HCT116 (cell line): ENCODE measurements at regions of chr3 and their contacts with region 1.

Region 1: DNA sequence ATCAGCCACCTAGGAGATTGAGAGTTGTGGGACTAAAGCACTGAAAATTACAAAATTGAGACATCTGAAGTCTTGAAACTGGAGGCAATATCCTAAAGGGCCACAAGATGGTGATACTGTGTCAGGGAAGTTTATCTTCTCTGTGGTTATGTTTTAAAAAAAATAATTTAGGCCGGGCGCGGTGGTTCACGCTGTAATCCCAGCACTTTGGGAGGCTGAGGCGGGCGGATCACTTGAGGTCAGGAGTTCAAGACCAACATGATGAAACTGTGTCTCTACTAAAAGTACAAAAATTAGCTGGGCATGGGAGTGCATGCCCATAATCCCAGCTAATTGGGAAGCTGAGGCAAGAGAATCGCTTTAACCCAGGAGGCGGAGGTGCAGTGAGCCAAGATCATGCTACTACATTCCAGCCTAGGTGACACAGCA is 17.9 kb upstream of the NIT2 start:
- DNase-seq: peak; percentile 46
- ATAC-seq: peak; percentile 86
- H3K4me3 ChIP-seq: no peak overlapping the region
- H3K27ac ChIP-seq: no peak overlapping the region
- H3K4me1 ChIP-seq: peaks cover 3 to 4% of the 10 kb centered on the region in 2 experiments; a peak in 2 of 4 replicates
- H3K27me3 ChIP-seq: no peaks in the 10 kb centered on the region
- CTCF ChIP-seq: peak; percentile 32 to 71 (median 65); a peak in 5 of 6 replicates
- POLR2A ChIP-seq: no peak
- RAD21 ChIP-seq: peak; percentile 73

Region 2: GRCh38 chr3:100590114-100590839 is 273.6 kb after region 1 on chr3:
- CTCF ChIA-PET with region 1: interaction called, 4 read pairs
- POLR2A ChIA-PET with region 1: no interaction called
- RAD21 ChIA-PET with region 1: no interaction called
- intact Hi-C with region 1: loop called (anchors 1 kb)
- DNase-seq: peak; percentile 63
- ATAC-seq: peak; percentile 91
- H3K4me3 ChIP-seq: peak overlapping the region; percentile 16 to 42; a peak in 3 of 4 replicates
- H3K27ac ChIP-seq: no peak overlapping the region
- H3K4me1 ChIP-seq: peaks cover 0 to 5% of the 10 kb centered on the region in 2 experiments; a peak in 1 of 4 replicates
- H3K27me3 ChIP-seq: no peaks in the 10 kb centered on the region
- CTCF ChIP-seq: peak; percentile 75 to 89 (median 76)
- POLR2A ChIP-seq: no peak
- RAD21 ChIP-seq: peak; percentile 87

Region 3: GRCh38 chr3:100613721-100614390 is 297.2 kb after region 1 on chr3:
- CTCF ChIA-PET with region 1: no interaction called
- POLR2A ChIA-PET with region 1: no interaction called
- RAD21 ChIA-PET with region 1: no interaction called
- intact Hi-C with region 1: no loop called
- DNase-seq: no peak
- ATAC-seq: no peak
- H3K4me3 ChIP-seq: no peak overlapping the region
- H3K27ac ChIP-seq: no peak overlapping the region
- H3K4me1 ChIP-seq: no peaks in the 10 kb centered on the region
- H3K27me3 ChIP-seq: no peaks in the 10 kb centered on the region
- CTCF ChIP-seq: no peak
- POLR2A ChIP-seq: no peak
- RAD21 ChIP-seq: no peak

Region 4: GRCh38 chr3:100710261-100710968 is 393.8 kb after region 1 on chr3:
- CTCF ChIA-PET with region 1: no interaction called
- POLR2A ChIA-PET with region 1: no interaction called
- RAD21 ChIA-PET with region 1: no interaction called
- intact Hi-C with region 1: loop called (anchors 10 kb)
- DNase-seq: peak; percentile 31
- ATAC-seq: peak; percentile 39
- H3K4me3 ChIP-seq: peak overlapping the region; percentile 78 to 92
- H3K27ac ChIP-seq: peak overlapping the region; percentile 74
- H3K4me1 ChIP-seq: peaks cover 5 to 17% of the 10 kb centered on the region in 2 experiments; a peak in 3 of 4 replicates
- H3K27me3 ChIP-seq: no peaks in the 10 kb centered on the region
- CTCF ChIP-seq: peak in 2 of 3 experiments; percentile 32 to 45; a peak in 4 of 6 replicates
- POLR2A ChIP-seq: no peak
- RAD21 ChIP-seq: no peak; the same call in 1 of the 2 replicates

Region 5: DNA sequence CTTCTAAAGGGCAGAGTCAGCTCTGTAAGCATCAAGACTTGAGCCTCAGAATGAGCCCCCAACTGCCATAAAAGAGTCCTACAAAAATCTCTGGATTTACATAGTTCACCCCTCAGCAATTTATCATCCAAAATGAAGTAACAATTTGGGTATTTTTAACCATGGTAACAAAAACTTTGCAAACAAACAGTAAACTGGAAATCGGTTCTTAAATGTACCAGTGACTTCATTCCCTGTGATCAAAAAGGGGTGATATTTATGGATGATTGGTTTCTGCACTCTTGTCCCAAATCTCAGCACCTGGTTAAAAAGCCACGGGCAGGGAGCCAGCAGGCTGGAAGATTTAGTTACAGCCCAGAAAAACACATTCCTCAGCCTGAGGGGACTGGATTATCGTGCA is 466.3 kb after region 1 on chr3:
- CTCF ChIA-PET with region 1: no interaction called
- POLR2A ChIA-PET with region 1: no interaction called
- RAD21 ChIA-PET with region 1: no interaction called
- intact Hi-C with region 1: loop called (anchors 10 kb)
- DNase-seq: no peak
- ATAC-seq: no peak
- H3K4me3 ChIP-seq: no peak overlapping the region
- H3K27ac ChIP-seq: no peak overlapping the region
- H3K4me1 ChIP-seq: no peaks in the 10 kb centered on the region
- H3K27me3 ChIP-seq: no peaks in the 10 kb centered on the region
- CTCF ChIP-seq: no peak
- POLR2A ChIP-seq: no peak
- RAD21 ChIP-seq: no peak

Region 6: GRCh38 chr3:100893590-100893989 is 576.9 kb after region 1 on chr3:
- CTCF ChIA-PET with region 1: no interaction called
- POLR2A ChIA-PET with region 1: no interaction called
- RAD21 ChIA-PET with region 1: no interaction called
- intact Hi-C with region 1: loop called (anchors 10 kb)
- DNase-seq: no peak
- ATAC-seq: peak; percentile 75
- H3K4me3 ChIP-seq: no peak overlapping the region
- H3K27ac ChIP-seq: no peak overlapping the region
- H3K4me1 ChIP-seq: no peaks in the 10 kb centered on the region
- H3K27me3 ChIP-seq: no peaks in the 10 kb centered on the region
- CTCF ChIP-seq: peak; percentile 53 to 71 (median 58); a peak in 5 of 6 replicates
- POLR2A ChIP-seq: no peak
- RAD21 ChIP-seq: peak; percentile 78